ENCODE measurements at regions of chr1 and their contacts with region 1.

Region 1: DNA sequence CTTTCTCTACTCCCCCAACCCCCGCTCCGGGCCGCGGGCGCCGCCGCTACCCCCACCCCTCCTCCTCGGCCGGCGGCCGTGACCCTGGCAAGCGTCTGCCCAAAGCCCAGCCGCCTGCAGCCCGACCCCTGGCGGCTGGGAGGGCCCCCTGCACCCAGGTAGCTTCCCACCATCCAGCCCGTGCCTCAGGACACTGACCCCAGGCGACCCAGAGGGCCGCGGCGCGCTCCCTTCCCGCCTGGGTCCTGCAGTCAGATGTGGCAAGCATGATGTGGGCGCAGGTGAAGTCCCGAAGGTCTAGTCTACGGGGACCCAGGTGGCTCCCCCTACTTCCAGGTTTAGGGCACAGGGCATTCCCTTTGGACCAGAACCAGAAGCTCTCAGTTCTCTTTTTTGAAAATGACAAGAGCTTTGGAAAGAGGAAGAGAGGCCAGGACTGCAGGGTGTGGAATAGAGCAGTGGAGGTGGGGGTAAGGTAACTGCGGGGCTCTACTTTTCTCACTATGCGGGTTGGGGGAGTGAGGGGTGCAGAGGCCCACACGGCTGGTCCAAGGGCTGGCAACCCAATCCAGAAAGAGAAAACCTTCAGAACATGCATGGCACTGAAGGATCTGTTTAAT is at the start of gene DENND4B:
- H3K4me3 Mint-ChIP-seq: peak within 1 kb of the TSS; percentile 90
- H3K27ac Mint-ChIP-seq: peak within 1 kb of the TSS; percentile 99
- H3K4me1 Mint-ChIP-seq: peaks cover 83% of the 10 kb centered on the region
- H3K27me3 Mint-ChIP-seq: no peaks in the 10 kb centered on the region

Region 2: DNA sequence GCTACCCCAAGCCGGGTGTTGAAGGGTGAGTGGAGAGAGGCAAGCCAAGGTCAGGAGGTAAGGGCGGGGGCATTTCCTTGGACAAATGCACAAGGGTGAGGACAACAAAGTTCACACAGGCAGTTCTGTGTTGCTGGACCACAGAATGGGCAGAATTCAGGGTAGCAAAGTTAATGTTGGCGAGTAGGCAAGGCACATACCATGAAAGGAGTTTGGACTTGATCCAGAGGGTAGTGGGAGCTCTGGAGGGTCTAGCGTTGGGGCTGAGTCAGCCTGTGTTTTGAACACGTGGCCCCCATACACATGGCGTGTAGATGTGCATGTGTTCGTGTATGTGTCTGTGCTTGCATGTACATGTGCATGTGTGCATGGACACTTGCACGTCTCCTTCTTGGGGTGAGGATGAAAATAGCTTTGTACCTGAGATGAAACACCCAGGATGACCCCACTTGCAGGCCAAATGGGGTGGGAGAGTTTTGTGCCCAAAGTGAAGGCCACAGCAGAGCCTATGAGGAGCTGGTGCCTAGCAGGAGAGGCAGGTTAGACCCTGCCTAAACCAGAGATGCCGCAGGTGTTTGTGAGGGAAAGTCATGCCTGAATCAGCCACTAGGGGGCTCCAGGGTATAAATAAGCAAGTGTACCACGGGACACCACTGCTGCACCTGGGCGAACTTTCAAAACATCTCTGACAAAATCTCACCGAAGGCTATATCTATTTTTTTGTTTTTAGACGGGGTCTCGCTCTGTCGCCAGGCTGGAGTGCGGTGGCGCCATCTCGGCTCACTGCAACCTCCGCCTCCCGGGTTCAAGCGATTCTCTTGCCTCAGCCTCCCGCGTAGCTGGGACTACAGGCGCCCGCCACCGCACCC is 149.7 kb before region 1 on chr1:
- intact Hi-C with region 1: loop called (anchors 10 kb)
- H3K4me3 Mint-ChIP-seq: no peak overlapping the region
- H3K27ac Mint-ChIP-seq: peak overlapping the region; percentile 25
- H3K4me1 Mint-ChIP-seq: peaks cover 56% of the 10 kb centered on the region
- H3K27me3 Mint-ChIP-seq: peaks cover under 1% of the 10 kb centered on the region

Region 3: GRCh38 chr1:153922972-153923925 is 23.5 kb before region 1 on chr1 and contains the start of gene GATAD2B:
- intact Hi-C with region 1: loop called (anchors 1 kb)
- H3K4me3 Mint-ChIP-seq: peak within 1 kb of the TSS; percentile 95
- H3K27ac Mint-ChIP-seq: peak within 1 kb of the TSS; percentile 92
- H3K4me1 Mint-ChIP-seq: peaks cover 41% of the 10 kb centered on the region
- H3K27me3 Mint-ChIP-seq: no peaks in the 10 kb centered on the region

Region 4: GRCh38 chr1:153958111-153958960 is 11.6 kb after region 1 on chr1 and contains the start of gene CRTC2:
- intact Hi-C with region 1: loop called (anchors 1 kb)
- H3K4me3 Mint-ChIP-seq: peak within 1 kb of the TSS; percentile 94
- H3K27ac Mint-ChIP-seq: peak within 1 kb of the TSS; percentile 94
- H3K4me1 Mint-ChIP-seq: peaks cover 79% of the 10 kb centered on the region
- H3K27me3 Mint-ChIP-seq: no peaks in the 10 kb centered on the region

Region 5: DNA sequence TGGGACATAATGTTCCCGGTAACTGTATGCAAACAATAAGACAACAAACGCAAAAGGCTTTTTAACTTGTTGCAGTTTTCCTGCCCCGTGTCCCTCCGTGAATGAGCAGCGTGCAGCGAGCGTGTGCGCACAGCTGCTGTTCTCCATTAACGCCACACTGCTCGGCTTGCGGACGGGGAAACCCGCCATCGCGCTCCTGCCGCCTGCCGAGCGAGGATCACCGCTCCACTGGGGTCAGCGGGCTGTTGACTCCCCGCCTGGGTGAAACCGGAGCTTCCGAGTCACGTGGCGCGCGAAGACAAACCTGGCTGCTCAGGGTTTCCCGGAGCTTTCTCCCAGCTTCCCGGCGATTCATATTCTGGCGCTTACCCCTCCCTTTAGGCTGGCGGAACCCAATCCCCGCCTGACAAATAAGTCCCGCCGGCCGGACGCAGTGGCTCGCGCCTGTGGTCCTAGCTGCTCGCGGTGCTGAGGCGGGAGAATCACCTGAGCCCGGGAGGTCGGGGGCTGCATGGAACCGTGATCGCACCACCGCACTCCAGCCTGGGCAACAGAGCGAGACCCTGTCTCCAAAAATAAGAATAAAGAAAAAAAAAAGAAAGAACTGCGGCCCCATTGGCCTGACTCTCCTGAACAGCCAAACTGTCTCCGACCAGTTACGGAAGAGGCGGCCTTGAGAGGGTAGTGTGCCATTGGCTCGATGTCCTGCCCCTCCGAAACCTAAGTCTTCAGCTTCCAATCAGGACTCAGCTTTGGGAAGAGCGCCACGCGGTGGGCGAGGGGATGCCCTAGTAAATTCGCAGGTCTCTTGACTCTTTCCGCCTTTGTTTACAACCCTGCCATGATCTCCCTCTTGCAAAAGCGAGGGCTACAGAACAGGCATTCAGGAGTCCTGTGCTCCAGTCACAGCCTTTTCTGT is 20.6 kb after region 1 on chr1 and contains the start of gene CREB3L4:
- intact Hi-C with region 1: loop called (anchors 1 kb)
- H3K4me3 Mint-ChIP-seq: peak within 1 kb of the TSS; percentile 97
- H3K27ac Mint-ChIP-seq: peak within 1 kb of the TSS; percentile 95
- H3K4me1 Mint-ChIP-seq: peaks cover 47% of the 10 kb centered on the region
- H3K27me3 Mint-ChIP-seq: no peaks in the 10 kb centered on the region

Measured in dendritic cell treated with granulocyte-macrophage colony-stimulating factor and Interleukin-4, amounts not matched to agents 40 ng/mL and 50 ng/mL, for 4 days (primary cell).